Mammary epithelial cell (primary cell): ENCODE measurements at regions of chr11 and their contacts with region 1.

Region 1: GRCh38 chr11:69101115-69101791 is 52.5 kb downstream of the TPCN2 start:
- DNase-seq: peak; percentile 74
- H3K4me3 ChIP-seq: no peak overlapping the region
- H3K27ac ChIP-seq: no peak overlapping the region
- H3K4me1 ChIP-seq: peaks cover 3% of the 10 kb centered on the region
- H3K27me3 ChIP-seq: no peaks in the 10 kb centered on the region
- CTCF ChIP-seq: peak; percentile 97 to 100

Region 2: GRCh38 chr11:69240332-69241074 is 139.2 kb after region 1 on chr11:
- CTCF ChIA-PET with region 1: no interaction called
- dilution Hi-C with region 1: no loop called
- in situ Hi-C with region 1: no loop called
- intact Hi-C with region 1: loop called (anchors 1 kb)
- DNase-seq: peak; percentile 10
- H3K4me3 ChIP-seq: no peak overlapping the region
- H3K27ac ChIP-seq: no peak overlapping the region
- H3K4me1 ChIP-seq: no peaks in the 10 kb centered on the region
- H3K27me3 ChIP-seq: no peaks in the 10 kb centered on the region
- CTCF ChIP-seq: peak; percentile 45 to 65

Region 3: DNA sequence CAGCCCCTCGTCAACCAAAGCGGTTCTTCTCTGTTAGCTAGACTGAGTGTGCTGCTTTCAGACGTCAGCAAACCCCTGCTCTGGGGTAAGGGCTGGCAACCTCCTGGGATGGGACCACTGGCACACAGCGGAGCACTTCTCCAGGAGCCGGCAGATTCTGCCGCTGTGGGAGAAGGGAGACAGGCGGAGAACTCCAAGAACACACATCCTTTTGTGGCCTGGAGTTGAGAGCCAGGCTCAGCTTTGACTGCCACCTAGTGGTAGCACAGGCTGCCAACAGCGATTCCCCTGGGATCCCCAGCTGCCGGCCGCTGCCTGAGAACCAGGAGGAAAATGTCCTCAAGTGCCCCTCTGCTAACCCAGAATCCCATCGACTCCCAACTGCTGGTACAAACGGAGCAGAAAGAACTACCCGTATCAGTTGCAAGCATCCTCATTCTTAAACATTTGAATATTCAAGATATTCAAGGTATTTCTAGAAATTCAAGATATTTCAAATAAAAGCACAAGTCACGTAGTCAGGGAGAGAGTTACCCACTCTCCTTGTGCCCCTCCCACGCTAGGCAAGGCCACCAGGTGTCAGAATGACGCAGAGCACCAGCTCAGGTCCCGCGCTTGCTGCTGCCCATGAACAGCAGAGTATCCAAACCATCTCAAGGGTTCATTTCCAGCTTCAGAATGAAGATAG is 569.0 kb after region 1 on chr11:
- CTCF ChIA-PET with region 1: interaction called, 4 read pairs
- dilution Hi-C with region 1: no loop called
- in situ Hi-C with region 1: loop called in 1 of 2 experiments (anchors 5 kb)
- intact Hi-C with region 1: loop called (anchors 1 kb)
- DNase-seq: peak; percentile 63
- H3K4me3 ChIP-seq: no peak overlapping the region
- H3K27ac ChIP-seq: no peak overlapping the region
- H3K4me1 ChIP-seq: peaks cover 19% of the 10 kb centered on the region
- H3K27me3 ChIP-seq: no peaks in the 10 kb centered on the region
- CTCF ChIP-seq: peak; percentile 98 to 99